B cell (primary cell): ENCODE measurements at regions of chr12 and their contacts with region 1.

Region 1: DNA sequence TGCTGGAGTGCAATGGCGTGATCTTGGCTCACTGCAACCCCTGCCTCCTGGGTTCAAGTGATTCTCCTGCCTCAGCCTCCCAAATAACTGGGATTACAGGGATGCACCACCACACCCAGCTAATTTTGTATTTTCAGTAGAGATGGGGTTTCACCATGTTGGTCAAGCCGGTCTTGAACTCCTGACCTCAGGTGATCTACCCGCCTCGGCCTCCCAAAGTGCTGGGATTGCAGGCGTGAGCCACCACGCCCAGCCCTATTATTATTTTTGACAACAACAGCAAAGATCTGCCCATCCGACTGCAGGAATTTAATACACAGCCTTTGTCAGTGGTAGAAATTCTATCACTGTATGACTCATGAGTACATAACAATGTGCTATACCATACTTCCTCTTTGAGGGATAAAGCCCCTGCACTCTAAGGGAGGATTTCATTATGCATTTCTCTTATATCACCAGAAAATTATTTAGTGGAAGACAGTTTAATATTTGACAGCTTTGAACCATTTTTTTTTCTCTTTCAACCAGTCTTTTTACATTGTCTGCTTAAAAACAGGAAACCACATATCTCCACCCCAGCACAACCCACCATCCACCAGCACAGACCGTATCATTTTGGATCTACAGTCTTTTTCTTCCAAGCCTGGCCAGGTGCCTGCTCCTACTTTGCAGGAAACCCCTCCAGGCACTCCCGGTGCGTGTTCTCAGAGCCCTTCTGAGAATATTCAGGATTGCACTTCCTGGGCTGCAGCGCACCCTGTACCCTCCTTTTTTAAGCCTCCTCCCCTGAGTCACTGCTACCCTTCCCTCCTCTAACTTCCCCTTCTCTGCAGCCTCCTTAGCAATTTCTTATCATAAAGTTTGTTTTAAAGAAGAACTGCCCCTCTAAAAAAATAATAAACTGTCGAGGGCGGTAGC is 594 bp downstream of the ARHGDIB start:
- DNase-seq: no peak
- ATAC-seq: peak; percentile 64
- H3K4me3 ChIP-seq: peak overlapping the region; percentile 65 to 99 (median 84)
- H3K4me3 Mint-ChIP-seq: peak overlapping the region; percentile 97
- H3K27ac ChIP-seq: peak overlapping the region; percentile 68 to 94
- H3K27ac Mint-ChIP-seq: peak overlapping the region; percentile 98
- H3K4me1 ChIP-seq: peaks cover 45 to 55% of the 10 kb centered on the region in 2 donors
- H3K4me1 Mint-ChIP-seq: peaks cover 72% of the 10 kb centered on the region
- H3K27me3 ChIP-seq: no peaks in the 10 kb centered on the region
- H3K27me3 Mint-ChIP-seq: no peaks in the 10 kb centered on the region
- CTCF ChIP-seq: no peak

Region 2: DNA sequence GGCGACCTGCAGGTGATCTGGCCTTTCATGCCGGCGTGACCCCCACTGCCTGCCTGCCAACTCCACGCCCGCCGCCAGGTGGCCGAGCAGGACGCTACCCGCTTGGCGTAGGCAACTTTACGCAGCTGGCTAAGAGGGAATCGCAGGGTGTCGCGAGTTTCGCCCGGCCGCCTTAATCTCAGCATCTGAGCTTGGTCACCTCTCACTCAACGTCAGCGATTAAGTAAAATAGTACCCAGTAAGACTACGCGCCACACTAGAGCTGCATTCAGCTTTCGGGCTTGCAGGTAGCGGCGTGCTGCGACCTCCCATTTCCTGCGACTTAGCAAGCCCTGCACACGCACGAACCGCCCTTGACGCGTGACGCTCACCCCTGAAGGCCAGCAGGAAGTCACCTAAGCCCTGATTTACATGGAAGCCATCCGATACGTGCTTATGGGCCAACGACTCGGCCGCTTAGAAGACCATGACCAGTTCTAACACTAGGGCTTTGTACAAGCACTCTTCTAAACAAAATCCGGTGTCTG is 190.8 kb before region 1 on chr12:
- CTCF ChIA-PET with region 1: no interaction called
- POLR2A ChIA-PET with region 1: interaction called, 3 read pairs
- intact Hi-C with region 1: loop called (anchors 1 kb)
- DNase-seq: peak; percentile 97
- ATAC-seq: peak; percentile 57
- H3K4me3 ChIP-seq: peak overlapping the region; percentile 78 to 98 (median 93)
- H3K4me3 Mint-ChIP-seq: peak overlapping the region; percentile 97
- H3K27ac ChIP-seq: peak overlapping the region; percentile 94 to 96
- H3K27ac Mint-ChIP-seq: peak overlapping the region; percentile 97
- H3K4me1 ChIP-seq: peaks cover 28 to 45% of the 10 kb centered on the region in 2 donors
- H3K4me1 Mint-ChIP-seq: peaks cover 55% of the 10 kb centered on the region
- H3K27me3 ChIP-seq: no peaks in the 10 kb centered on the region
- H3K27me3 Mint-ChIP-seq: no peaks in the 10 kb centered on the region
- CTCF ChIP-seq: peak; percentile 86

Region 3: GRCh38 chr12:14803011-14803829 is 157.6 kb before region 1 on chr12 and contains the starts of genes C12orf60 and WBP11:
- CTCF ChIA-PET with region 1: no interaction called
- POLR2A ChIA-PET with region 1: interaction called, 3 read pairs
- intact Hi-C with region 1: loop called (anchors 1 kb)
- DNase-seq: peak; percentile 96
- ATAC-seq: peak; percentile 94
- H3K4me3 ChIP-seq: peak within 1 kb of the TSS; percentile 89 to 99 (median 93)
- H3K4me3 Mint-ChIP-seq: no peak within 1 kb of the TSS
- H3K27ac ChIP-seq: peak within 1 kb of the TSS; percentile 98
- H3K27ac Mint-ChIP-seq: peak within 1 kb of the TSS; percentile 41
- H3K4me1 ChIP-seq: peaks cover 13 to 17% of the 10 kb centered on the region in 2 donors
- H3K4me1 Mint-ChIP-seq: peaks cover 11% of the 10 kb centered on the region
- H3K27me3 ChIP-seq: no peaks in the 10 kb centered on the region
- H3K27me3 Mint-ChIP-seq: no peaks in the 10 kb centered on the region
- CTCF ChIP-seq: no peak
- total RNA-seq, gene C12orf60: 1.2 and 1.4 TPM in 2 replicates
- total RNA-seq, gene WBP11: 77.3 and 84.7 TPM in 2 replicates

Region 4: DNA sequence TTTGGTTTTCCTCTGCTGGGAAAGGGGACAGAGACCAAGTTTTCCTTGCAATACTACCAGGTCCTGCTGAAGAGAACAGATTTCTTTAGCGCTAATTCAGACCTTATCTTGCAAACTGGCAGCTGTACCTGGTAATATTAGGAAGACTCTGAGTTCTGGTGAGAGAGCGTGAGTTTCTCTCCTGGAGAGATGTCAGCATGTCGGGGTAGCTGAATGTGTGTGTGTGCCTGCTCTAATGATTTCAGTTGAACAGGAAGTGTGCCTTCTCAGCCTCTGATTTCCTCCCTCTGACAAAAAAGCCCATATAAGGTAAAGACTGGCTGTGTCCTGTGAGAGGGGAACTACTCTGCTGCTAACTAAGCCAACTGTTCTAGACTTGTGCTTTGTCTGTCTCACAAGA is 12.1 kb before region 1 on chr12:
- CTCF ChIA-PET with region 1: interaction called, 4 read pairs
- POLR2A ChIA-PET with region 1: interaction called, 5 read pairs
- intact Hi-C with region 1: loop called (anchors 1 kb)
- DNase-seq: peak; percentile 88
- ATAC-seq: peak; percentile 94
- H3K4me3 ChIP-seq: peak overlapping the region in 3 of 5 experiments; percentile 26 to 53 (median 27)
- H3K4me3 Mint-ChIP-seq: peak overlapping the region; percentile 84
- H3K27ac ChIP-seq: peak overlapping the region; percentile 65 to 94
- H3K27ac Mint-ChIP-seq: peak overlapping the region; percentile 97
- H3K4me1 ChIP-seq: peaks cover 61 to 71% of the 10 kb centered on the region in 2 donors
- H3K4me1 Mint-ChIP-seq: peaks cover 72% of the 10 kb centered on the region
- H3K27me3 ChIP-seq: no peaks in the 10 kb centered on the region
- H3K27me3 Mint-ChIP-seq: no peaks in the 10 kb centered on the region
- CTCF ChIP-seq: no peak

Region 5: DNA sequence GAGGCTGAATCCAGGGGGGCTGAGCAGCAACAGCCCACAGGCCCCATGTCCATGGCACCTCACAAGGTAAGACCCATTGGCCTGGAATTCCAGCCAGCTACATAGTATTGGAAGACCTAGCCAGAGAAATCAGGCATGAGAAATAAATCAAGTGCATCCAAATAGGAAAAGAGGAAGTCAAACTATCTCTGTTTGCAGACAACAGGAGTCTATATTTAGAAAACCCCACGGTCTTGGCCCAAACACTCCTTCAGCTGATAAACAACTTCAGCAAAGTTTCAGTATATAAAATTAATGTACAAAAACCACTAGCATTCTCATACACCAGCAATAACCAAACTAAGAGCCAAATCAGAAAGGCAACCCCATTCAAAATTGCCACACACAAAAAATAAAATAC is 29.0 kb after region 1 on chr12:
- CTCF ChIA-PET with region 1: interaction called, 13 read pairs
- POLR2A ChIA-PET with region 1: interaction called, 3 read pairs
- intact Hi-C with region 1: loop called (anchors 1 kb)
- DNase-seq: peak; percentile 62
- ATAC-seq: peak; percentile 65
- H3K4me3 ChIP-seq: peak overlapping the region in 1 of 5 experiments; percentile 13
- H3K4me3 Mint-ChIP-seq: peak overlapping the region; percentile 79
- H3K27ac ChIP-seq: peak overlapping the region; percentile 47 to 67
- H3K27ac Mint-ChIP-seq: peak overlapping the region; percentile 88
- H3K4me1 ChIP-seq: peaks cover 44 to 51% of the 10 kb centered on the region in 2 donors
- H3K4me1 Mint-ChIP-seq: peaks cover 68% of the 10 kb centered on the region
- H3K27me3 ChIP-seq: no peaks in the 10 kb centered on the region
- H3K27me3 Mint-ChIP-seq: no peaks in the 10 kb centered on the region
- CTCF ChIP-seq: no peak

Region 6: GRCh38 chr12:15575671-15576541 is 615.1 kb after region 1 on chr12:
- CTCF ChIA-PET with region 1: no interaction called
- POLR2A ChIA-PET with region 1: no interaction called
- intact Hi-C with region 1: loop called (anchors 2 kb)
- DNase-seq: no peak
- ATAC-seq: no peak
- H3K4me3 ChIP-seq: no peak overlapping the region
- H3K4me3 Mint-ChIP-seq: no peak overlapping the region
- H3K27ac ChIP-seq: no peak overlapping the region
- H3K27ac Mint-ChIP-seq: no peak overlapping the region
- H3K4me1 ChIP-seq: peaks cover 7 to 9% of the 10 kb centered on the region in 2 donors
- H3K4me1 Mint-ChIP-seq: peaks cover 6% of the 10 kb centered on the region
- H3K27me3 ChIP-seq: no peaks in the 10 kb centered on the region
- H3K27me3 Mint-ChIP-seq: no peaks in the 10 kb centered on the region
- CTCF ChIP-seq: no peak